H1 (cell line): ENCODE measurements at regions of chr6 and their contacts with region 1.

Region 1: DNA sequence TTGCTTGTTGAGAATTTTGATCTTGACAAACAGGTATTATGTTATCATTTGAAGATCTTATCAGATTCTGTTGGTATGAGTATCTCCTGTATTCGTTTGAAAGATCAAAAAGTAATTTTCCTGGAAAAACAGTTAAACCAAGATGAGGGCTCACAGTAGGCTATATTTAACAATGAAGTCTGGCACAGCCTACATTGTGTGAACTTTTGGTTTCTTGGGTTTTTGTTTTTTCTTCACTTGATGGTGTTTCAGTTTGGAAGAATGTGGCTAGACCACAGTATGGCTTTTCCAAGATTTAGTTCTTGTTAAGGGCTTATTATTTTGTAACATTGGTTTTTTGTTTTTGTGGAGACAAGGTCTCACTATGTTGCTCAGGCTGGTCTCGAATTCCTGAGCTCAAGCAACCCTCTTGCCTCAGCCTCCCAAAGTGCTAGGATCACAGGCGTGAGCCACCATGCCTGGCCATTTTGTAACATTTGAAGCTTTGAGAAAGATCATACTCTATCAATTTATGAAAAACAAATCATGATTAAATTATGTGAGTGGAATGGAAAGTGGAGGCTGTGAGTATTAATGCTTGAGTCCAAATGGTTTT is 306.5 kb downstream of the CDKAL1 start:
- DNase-seq: no peak
- H3K4me3 ChIP-seq: no peak overlapping the region
- H3K27ac ChIP-seq: no peak overlapping the region
- H3K4me1 ChIP-seq: no peaks in the 10 kb centered on the region
- H3K27me3 ChIP-seq: no peaks in the 10 kb centered on the region
- CTCF ChIP-seq: no peak
- EP300 ChIP-seq: no peak
- POLR2A ChIP-seq: no peak
- RAD21 ChIP-seq: no peak

Region 2: DNA sequence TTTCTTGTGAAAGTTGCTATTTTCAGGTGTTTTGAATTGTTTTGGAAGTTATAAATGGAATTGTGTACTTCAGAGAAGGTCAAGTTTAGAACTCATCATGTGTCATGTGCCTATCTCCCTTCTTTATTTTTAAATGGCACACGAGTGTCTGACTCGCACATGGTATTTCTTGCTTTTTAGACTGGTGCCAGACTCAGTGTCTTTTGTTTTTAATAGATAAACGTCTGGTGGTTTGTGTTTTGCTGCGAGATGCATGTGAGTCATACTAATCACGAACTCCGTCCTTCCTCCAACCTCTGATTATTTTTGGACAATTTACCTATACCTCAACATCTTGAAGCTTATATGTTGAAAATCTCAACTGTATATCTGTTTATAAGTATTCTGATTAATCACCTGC is 14.4 kb before region 1 on chr6:
- CTCF ChIA-PET with region 1: interaction called, 12 read pairs
- POLR2A ChIA-PET with region 1: no interaction called
- DNase-seq: no peak
- H3K4me3 ChIP-seq: no peak overlapping the region
- H3K27ac ChIP-seq: no peak overlapping the region
- H3K4me1 ChIP-seq: no peaks in the 10 kb centered on the region
- H3K27me3 ChIP-seq: no peaks in the 10 kb centered on the region
- CTCF ChIP-seq: no peak
- EP300 ChIP-seq: no peak
- POLR2A ChIP-seq: no peak
- RAD21 ChIP-seq: no peak

Region 3: DNA sequence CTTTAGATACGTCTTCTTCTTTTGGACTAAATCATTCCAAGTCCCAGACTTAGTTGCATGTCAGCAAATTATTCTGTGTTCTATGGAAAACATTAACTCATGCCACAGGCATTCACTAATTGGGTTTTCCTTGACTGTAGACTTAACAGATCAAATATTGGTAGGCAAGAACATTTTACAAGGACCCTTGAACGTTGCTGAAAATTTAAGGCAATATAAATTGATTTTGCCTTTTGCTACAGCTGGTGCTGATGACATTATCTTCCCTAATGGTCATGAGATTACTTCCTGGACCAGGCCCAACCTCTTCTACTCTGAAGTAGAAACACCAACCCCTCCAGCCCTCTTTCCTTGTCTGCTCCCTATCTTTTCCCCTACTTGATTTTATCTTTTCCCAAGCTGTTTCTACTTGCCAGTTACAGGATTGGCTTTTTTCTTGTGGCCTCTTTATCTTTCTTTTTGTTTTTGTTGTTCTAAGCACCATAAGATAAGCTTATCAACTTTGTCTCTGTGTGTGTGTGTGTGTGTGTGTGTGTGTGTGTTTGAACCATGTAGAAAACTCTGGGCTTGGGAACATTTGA is 238.8 kb after region 1 on chr6:
- CTCF ChIA-PET with region 1: no interaction called
- POLR2A ChIA-PET with region 1: no interaction called
- DNase-seq: no peak
- H3K4me3 ChIP-seq: no peak overlapping the region
- H3K27ac ChIP-seq: no peak overlapping the region
- H3K4me1 ChIP-seq: peaks cover 0 to 5% (median 2%) of the 10 kb centered on the region in 4 experiments; a peak in 4 of 7 replicates
- H3K27me3 ChIP-seq: no peaks in the 10 kb centered on the region
- CTCF ChIP-seq: no peak
- EP300 ChIP-seq: no peak
- POLR2A ChIP-seq: no peak
- RAD21 ChIP-seq: no peak